Pancreas (tissue), 10 donors: ENCODE measurements at regions of chr3 and their contacts with region 1.

Region 1: GRCh38 chr3:150469943-150470738 is 62.0 kb downstream of the TSC22D2 start:
- DNase-seq: no peak
- ATAC-seq: peak; percentile 10 to 54 (median 14)
- H3K4me3 ChIP-seq: no peak overlapping the region
- H3K27ac ChIP-seq: peak overlapping the region in 2 of 4 donors; percentile 31 to 47
- H3K4me1 ChIP-seq: peaks cover 0 to 12% (median 7%) of the 10 kb centered on the region in 3 donors
- H3K27me3 ChIP-seq: no peaks in the 10 kb centered on the region
- CTCF ChIP-seq: no peak

Region 2: GRCh38 chr3:150303776-150304175 is 166.4 kb before region 1 on chr3:
- intact Hi-C with region 1: loop called in 1 of 3 experiments (anchors 10 kb)
- DNase-seq: peak in 2 of 6 donors; percentile 16 to 33
- ATAC-seq: peak; percentile 77 to 85 (median 78)
- H3K4me3 ChIP-seq: no peak overlapping the region
- H3K27ac ChIP-seq: no peak overlapping the region
- H3K4me1 ChIP-seq: no peaks in the 10 kb centered on the region
- H3K27me3 ChIP-seq: no peaks in the 10 kb centered on the region
- CTCF ChIP-seq: peak in 2 of 4 donors; percentile 26 to 27